ENCODE measurements at regions of chr3 and their contacts with region 1.

Region 1: DNA sequence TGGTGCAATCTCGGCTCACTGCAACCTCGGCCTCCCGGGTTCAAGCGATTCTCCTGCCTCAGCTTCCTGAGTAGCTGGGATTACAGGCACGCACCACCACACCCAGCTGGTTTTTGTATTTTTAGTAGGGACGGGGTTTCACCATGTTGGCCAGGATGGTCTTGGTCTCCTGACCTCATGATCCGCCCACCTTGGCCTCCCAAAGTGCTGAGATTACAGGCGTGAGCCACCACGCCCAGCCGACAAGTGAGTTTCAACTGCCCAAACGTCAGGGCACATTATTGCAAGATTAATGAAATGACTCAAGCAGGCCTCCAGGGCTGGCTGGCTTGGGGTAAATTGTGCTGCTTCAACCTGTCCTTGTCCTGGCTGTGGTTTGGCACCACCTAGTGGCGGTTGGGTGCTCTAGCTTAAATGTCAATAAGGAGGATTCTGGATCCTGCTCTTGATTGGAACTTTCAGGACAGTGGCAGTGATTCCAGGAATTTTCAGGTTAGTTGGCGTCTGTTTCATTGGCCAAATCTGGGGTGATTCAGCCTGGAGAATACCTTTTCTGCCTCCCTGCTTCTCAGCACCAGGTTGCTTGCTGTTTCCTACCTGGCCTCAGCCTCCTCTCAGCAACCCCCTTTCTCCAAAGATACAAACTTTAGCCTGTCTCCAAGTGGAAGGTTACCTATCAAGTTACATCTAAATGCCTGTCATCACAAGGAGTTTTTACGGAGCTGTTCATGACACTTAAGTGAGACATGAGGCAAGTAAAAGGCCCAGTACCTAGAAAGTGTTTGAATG is 32.4 kb upstream of the SACM1L start:
- H3K4me3 Mint-ChIP-seq: no peak overlapping the region
- H3K27ac Mint-ChIP-seq: peak overlapping the region; percentile 77
- H3K4me1 Mint-ChIP-seq: peaks cover 38% of the 10 kb centered on the region
- H3K27me3 Mint-ChIP-seq: no peaks in the 10 kb centered on the region

Region 2: GRCh38 chr3:45037734-45038455 is 618.9 kb before region 1 on chr3:
- intact Hi-C with region 1: loop called (anchors 10 kb)
- H3K4me3 Mint-ChIP-seq: no peak overlapping the region
- H3K27ac Mint-ChIP-seq: peak overlapping the region; percentile 99
- H3K4me1 Mint-ChIP-seq: peaks cover 62% of the 10 kb centered on the region
- H3K27me3 Mint-ChIP-seq: peaks cover 2% of the 10 kb centered on the region

Region 3: DNA sequence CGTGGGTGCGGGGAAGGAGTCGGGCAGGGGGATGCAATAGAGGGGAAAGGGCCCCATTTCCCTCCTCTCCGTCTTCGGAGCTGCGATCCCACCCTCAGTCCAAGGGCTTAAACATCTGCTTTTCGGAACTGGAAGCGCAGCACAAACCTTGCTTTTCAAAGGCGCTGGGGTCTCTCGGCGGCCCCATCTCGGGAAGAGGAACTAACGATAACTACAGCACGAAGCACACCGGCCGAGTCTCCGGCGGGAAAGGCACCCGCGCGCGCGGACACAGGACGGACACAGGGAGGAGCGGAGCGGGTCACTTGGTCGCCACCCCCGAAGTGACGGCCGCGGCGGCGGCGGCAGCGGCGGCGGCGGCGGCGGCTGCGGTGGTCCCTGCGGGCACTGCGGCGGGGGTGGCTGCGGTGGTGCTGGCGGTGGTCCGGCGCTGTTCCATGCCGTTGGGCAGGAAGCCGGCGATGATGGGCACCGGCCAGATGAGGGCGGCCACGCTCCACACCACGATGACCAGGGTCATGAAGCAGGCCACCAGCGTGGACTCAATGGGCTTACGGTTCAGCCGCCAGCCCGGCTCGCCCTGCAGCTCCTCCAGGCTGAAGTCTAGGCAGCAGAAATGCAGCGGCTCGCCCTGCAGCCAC is 431.8 kb before region 1 on chr3:
- intact Hi-C with region 1: loop called (anchors 10 kb)
- H3K4me3 Mint-ChIP-seq: peak overlapping the region; percentile 82
- H3K27ac Mint-ChIP-seq: peak overlapping the region; percentile 34
- H3K4me1 Mint-ChIP-seq: peaks cover 16% of the 10 kb centered on the region
- H3K27me3 Mint-ChIP-seq: peaks cover 72% of the 10 kb centered on the region

Region 4: GRCh38 chr3:45507820-45508317 is 148.9 kb before region 1 on chr3:
- intact Hi-C with region 1: loop called (anchors 1 kb)
- H3K4me3 Mint-ChIP-seq: no peak overlapping the region
- H3K27ac Mint-ChIP-seq: no peak overlapping the region
- H3K4me1 Mint-ChIP-seq: no peaks in the 10 kb centered on the region
- H3K27me3 Mint-ChIP-seq: no peaks in the 10 kb centered on the region

Region 5: DNA sequence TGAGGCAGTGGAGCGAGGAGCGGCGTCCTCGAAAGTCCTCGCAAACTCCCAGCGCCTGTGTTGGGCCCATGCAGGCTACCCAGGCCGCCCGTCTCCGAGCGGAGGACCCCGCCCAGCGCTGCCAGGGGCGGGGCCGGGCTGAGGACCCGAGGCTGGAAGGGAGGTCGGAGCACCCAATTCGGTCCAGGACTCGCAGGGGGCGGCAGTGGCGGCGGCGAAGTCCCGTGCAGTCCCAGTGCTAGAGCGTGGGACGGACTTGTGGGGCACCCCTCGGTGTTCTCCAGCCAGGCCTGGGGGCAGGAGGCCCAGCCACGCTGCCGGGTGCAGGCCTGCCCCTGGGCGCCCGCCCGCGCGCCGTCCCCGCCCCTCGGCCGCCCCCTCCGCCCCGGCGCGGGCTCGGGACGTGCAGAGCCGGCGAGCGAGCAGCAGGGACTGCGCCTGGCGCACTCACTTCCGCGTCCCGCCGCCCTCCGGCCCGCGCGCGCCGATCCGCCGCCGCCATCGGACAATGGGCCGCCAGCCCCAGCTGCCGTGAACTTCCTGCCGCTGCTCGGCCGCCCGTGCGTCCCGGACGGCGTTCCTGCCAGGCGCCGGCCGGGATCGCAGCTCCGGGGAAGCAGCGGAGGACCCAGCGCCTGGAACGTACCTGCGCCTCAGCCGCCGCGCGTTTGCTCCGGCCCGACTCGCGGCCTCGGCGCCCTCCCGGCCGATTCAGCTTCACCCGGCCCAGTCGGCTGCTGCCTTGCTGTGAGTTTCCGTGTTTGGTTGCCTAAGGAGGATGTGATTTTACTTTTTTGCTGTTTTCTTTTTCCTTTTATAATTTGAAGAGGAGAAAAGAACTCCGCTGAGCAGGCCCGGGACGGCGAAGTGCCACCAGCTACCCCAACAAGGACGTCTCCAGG is 62.8 kb before region 1 on chr3:
- intact Hi-C with region 1: loop called (anchors 1 kb)
- H3K4me3 Mint-ChIP-seq: peak overlapping the region; percentile 81
- H3K27ac Mint-ChIP-seq: peak overlapping the region; percentile 85
- H3K4me1 Mint-ChIP-seq: peaks cover 59% of the 10 kb centered on the region
- H3K27me3 Mint-ChIP-seq: no peaks in the 10 kb centered on the region

Region 6: DNA sequence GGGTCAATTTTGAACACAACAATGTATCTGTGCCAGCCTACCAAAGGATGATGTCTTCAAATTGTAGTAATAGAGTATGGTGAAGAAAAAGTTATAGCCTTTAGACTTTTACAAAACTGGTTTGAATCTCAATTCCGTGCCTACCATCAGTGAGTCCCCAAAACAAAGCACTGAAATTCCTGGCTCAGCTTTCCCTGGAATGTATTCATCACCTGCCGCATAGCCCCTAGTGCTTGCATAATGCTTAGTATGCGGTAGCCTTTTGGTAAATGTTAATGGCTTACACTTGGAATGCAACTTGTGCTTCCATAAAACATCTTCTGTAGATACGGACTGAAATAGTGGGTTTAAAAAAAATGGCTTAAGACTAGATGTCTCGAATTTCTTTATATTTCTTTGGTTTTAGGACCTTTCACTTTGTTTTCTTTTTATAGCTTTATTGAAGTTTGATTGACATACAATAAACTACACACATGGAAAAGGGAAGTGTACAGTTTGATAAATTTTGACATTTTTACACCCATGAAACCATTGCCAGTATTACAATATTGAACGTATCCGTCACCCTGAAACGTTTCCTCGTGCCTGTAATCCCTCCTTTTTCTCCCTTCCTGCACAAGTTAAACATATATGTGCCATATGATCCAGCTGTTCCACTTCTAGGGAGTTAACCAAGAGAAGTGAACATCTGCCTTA is 44.6 kb after region 1 on chr3:
- intact Hi-C with region 1: no loop called
- H3K4me3 Mint-ChIP-seq: no peak overlapping the region
- H3K27ac Mint-ChIP-seq: no peak overlapping the region
- H3K4me1 Mint-ChIP-seq: peaks cover 12% of the 10 kb centered on the region
- H3K27me3 Mint-ChIP-seq: no peaks in the 10 kb centered on the region